ENCODE measurements at regions of chr19 and their contacts with region 1.

Region 1: GRCh38 chr19:49451430-49452181 is at the start of gene PIH1D1:
- DNase-seq: peak; percentile 99
- ATAC-seq: peak; percentile 87 to 89
- H3K4me3 ChIP-seq: peak within 1 kb of the TSS; percentile 67 to 100 (median 90)
- H3K27ac ChIP-seq: peak within 1 kb of the TSS; percentile 90 to 97 (median 96)
- H3K4me1 ChIP-seq: peaks cover 15 to 26% of the 10 kb centered on the region in 2 donors
- H3K27me3 ChIP-seq: no peaks in the 10 kb centered on the region
- CTCF ChIP-seq: peak in 3 of 5 experiments; percentile 9 to 46 (median 35)
- POLR2A ChIP-seq: peak in 1 of 2 donors; percentile 53
- total RNA-seq, gene PIH1D1: 41.9 to 107 (median 79.0) TPM

Region 2: GRCh38 chr19:49487277-49488045 is 35.9 kb after region 1 on chr19 and contains the start of gene RPL13A:
- in situ Hi-C with region 1: no loop called
- intact Hi-C with region 1: loop called (anchors 1 kb)
- DNase-seq: peak; percentile 99 to 100
- ATAC-seq: peak; percentile 95 to 97
- H3K4me3 ChIP-seq: peak within 1 kb of the TSS; percentile 83 to 96 (median 90)
- H3K27ac ChIP-seq: peak within 1 kb of the TSS; percentile 88 to 98 (median 94)
- H3K4me1 ChIP-seq: peaks cover 21 to 29% of the 10 kb centered on the region in 2 donors
- H3K27me3 ChIP-seq: no peaks in the 10 kb centered on the region
- CTCF ChIP-seq: no peak
- POLR2A ChIP-seq: peak; percentile 99
- total RNA-seq, gene RPL13A: 1,565 to 2,260 (median 1,899) TPM

Region 3: DNA sequence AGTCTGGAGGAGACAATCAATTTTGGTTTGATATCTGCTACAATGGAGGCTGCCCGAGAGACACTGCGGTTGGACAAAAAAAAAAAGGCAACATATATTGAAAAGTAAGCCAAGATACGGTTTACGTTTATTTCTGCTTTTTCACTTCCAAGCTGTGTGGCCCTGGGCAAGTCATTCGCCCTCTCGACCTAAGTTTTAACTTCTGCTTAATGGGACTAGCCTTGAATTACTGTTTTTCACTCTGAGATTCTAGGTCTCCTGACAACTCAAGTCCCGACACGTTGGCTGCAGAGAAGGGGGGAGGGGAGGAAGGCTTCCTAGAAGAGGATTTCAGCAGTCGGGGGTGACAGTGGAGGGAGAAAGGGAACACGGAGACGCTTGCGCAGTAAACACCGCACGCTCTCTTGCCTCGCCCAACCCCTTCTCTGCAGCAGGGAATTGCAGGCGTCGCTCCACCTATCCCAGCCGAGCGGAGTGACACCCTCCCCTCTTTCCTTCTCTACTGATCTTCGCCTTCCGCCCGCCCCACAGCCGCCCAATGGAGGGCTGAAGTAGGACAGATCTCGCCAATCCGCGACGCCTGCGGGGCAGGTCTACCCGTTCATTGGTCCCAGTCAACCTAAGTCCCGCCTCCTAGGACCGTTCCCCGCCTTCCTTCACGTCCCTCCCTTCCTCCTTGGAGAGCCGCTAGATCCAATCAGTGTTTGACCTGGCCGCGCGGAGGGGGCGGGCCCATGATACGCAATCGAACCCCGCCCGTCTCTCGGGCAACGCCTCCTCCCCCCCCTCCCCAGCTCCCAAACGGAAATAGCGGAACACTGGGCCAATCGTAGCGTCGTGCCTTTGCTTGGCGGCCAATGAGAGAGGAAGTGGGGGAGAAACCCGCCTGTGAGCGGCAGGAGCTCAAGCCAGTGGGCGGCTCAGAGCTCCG is 314.7 kb after region 1 on chr19:
- in situ Hi-C with region 1: no loop called
- intact Hi-C with region 1: loop called (anchors 1 kb)
- DNase-seq: peak; percentile 100
- ATAC-seq: peak; percentile 87 to 92
- H3K4me3 ChIP-seq: peak overlapping the region; percentile 48 to 97 (median 74)
- H3K27ac ChIP-seq: peak overlapping the region; percentile 91 to 98 (median 96)
- H3K4me1 ChIP-seq: peaks cover 19 to 22% of the 10 kb centered on the region in 2 donors
- H3K27me3 ChIP-seq: no peaks in the 10 kb centered on the region
- CTCF ChIP-seq: no peak
- POLR2A ChIP-seq: peak; percentile 71 to 75

Region 4: DNA sequence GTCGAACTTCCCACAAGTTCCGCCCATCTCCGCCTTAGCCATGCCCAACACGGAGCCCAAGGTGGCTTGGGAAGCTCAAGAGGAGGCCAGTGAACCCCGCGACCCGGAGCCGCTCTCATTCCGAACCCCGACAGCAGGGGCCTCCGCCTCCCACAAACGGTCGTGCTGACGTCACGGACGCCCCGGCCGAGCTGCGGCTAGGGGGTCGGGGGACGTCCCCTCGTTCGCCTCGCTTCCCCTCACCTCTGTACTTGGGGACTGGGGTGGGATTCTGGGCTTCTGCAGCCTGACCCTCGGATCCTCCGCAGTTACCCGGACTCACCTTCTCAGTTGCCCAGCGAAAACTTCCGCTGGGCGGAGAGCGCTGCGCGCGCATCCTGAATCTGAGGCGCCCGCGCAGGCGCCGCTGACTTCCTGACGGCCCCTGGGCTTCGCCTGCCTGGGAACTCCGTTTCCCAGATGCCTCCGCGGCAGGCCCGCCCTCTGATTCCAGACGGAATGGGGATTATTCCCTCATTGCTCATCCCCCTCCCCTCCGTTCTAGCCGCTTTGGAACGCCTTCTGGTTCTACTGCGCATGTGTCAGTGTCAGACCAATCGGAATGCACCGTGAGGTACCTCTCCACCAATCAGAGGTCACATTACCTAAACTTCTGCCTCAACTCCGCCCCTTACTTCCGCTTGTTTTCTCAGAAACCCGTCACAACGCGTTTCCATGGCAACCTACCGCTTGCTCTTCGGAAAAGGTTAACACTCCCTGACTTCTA is 573.6 kb after region 1 on chr19 and contains the start of gene VRK3:
- in situ Hi-C with region 1: no loop called
- intact Hi-C with region 1: loop called (anchors 5 kb)
- DNase-seq: peak; percentile 99
- ATAC-seq: peak; percentile 99
- H3K4me3 ChIP-seq: peak within 1 kb of the TSS; percentile 93 to 99 (median 96)
- H3K27ac ChIP-seq: peak within 1 kb of the TSS; percentile 90 to 98 (median 94)
- H3K4me1 ChIP-seq: peaks cover 24 to 27% of the 10 kb centered on the region in 2 donors
- H3K27me3 ChIP-seq: no peaks in the 10 kb centered on the region
- CTCF ChIP-seq: no peak
- POLR2A ChIP-seq: peak; percentile 56 to 77
- total RNA-seq, gene VRK3: 36.0 to 52.8 (median 39.9) TPM

Measured in gastrocnemius medialis (tissue), 4 donors.